Naive thymus-derived CD4-positive, alpha-beta T cell (primary cell): ENCODE measurements at regions of chr1 and their contacts with region 1.

Region 1: GRCh38 chr1:179081687-179082332 is at the start of gene TOR3A:
- DNase-seq: peak; percentile 51 to 82 (median 58)
- ATAC-seq: peak; percentile 80
- H3K4me3 ChIP-seq: peak within 1 kb of the TSS; percentile 93
- H3K4me3 Mint-ChIP-seq: peak within 1 kb of the TSS; percentile 91 to 100 (median 95)
- H3K27ac ChIP-seq: peak within 1 kb of the TSS; percentile 76
- H3K27ac Mint-ChIP-seq: peak within 1 kb of the TSS; percentile 84 to 99 (median 95)
- H3K4me1 ChIP-seq: peaks cover 4 to 11% of the 10 kb centered on the region in 2 donors
- H3K4me1 Mint-ChIP-seq: peaks cover 14 to 38% (median 25%) of the 10 kb centered on the region in 7 donors
- H3K27me3 ChIP-seq: no peaks in the 10 kb centered on the region
- H3K27me3 Mint-ChIP-seq: no peaks in the 10 kb centered on the region
- total RNA-seq, gene TOR3A: 18.8 to 43.8 (median 21.7) TPM

Region 2: GRCh38 chr1:178532392-178532791 is 549.4 kb before region 1 on chr1:
- CTCF ChIA-PET with region 1: no interaction called
- POLR2A ChIA-PET with region 1: no interaction called
- intact Hi-C with region 1: loop called in 1 of 2 experiments (anchors 5 kb)
- DNase-seq: peak; percentile 42 to 74 (median 63)
- ATAC-seq: peak; percentile 92
- H3K4me3 ChIP-seq: no peak overlapping the region
- H3K4me3 Mint-ChIP-seq: peak overlapping the region in 1 of 10 donors; percentile 27
- H3K27ac ChIP-seq: no peak overlapping the region
- H3K27ac Mint-ChIP-seq: no peak overlapping the region
- H3K4me1 ChIP-seq: peaks cover 0 to 6% of the 10 kb centered on the region in 2 donors
- H3K4me1 Mint-ChIP-seq: peaks cover 0 to 4% (median 4%) of the 10 kb centered on the region in 7 donors
- H3K27me3 ChIP-seq: no peaks in the 10 kb centered on the region
- H3K27me3 Mint-ChIP-seq: peaks cover 0 to 2% (median 0%) of the 10 kb centered on the region in 5 donors

Region 3: GRCh38 chr1:179025125-179025974 is 56.5 kb before region 1 on chr1 and contains the start of gene FAM20B:
- CTCF ChIA-PET with region 1: no interaction called
- POLR2A ChIA-PET with region 1: interaction called, 4 read pairs
- intact Hi-C with region 1: loop called (anchors 1 kb)
- DNase-seq: peak; percentile 80 to 89 (median 86)
- ATAC-seq: peak; percentile 95
- H3K4me3 ChIP-seq: peak within 1 kb of the TSS; percentile 71
- H3K4me3 Mint-ChIP-seq: peak within 1 kb of the TSS; percentile 87 to 98 (median 91)
- H3K27ac ChIP-seq: peak within 1 kb of the TSS; percentile 84
- H3K27ac Mint-ChIP-seq: peak within 1 kb of the TSS; percentile 86 to 92 (median 89)
- H3K4me1 ChIP-seq: peaks cover 10 to 17% of the 10 kb centered on the region in 2 donors
- H3K4me1 Mint-ChIP-seq: peaks cover 35 to 60% (median 50%) of the 10 kb centered on the region in 7 donors
- H3K27me3 ChIP-seq: no peaks in the 10 kb centered on the region
- H3K27me3 Mint-ChIP-seq: peaks cover 0 to 31% (median 0%) of the 10 kb centered on the region in 5 donors
- total RNA-seq, gene FAM20B: 14.3 to 27.9 (median 25.2) TPM

Region 4: GRCh38 chr1:179129702-179130473 is 48.1 kb after region 1 on chr1:
- CTCF ChIA-PET with region 1: no interaction called
- POLR2A ChIA-PET with region 1: interaction called, 4 read pairs
- intact Hi-C with region 1: loop called (anchors 1 to 2 kb)
- DNase-seq: peak in 8 of 9 donors; percentile 28 to 83 (median 72)
- ATAC-seq: peak; percentile 95
- H3K4me3 ChIP-seq: peak overlapping the region; percentile 38
- H3K4me3 Mint-ChIP-seq: peak overlapping the region; percentile 63 to 93 (median 80)
- H3K27ac ChIP-seq: peak overlapping the region; percentile 79
- H3K27ac Mint-ChIP-seq: peak overlapping the region; percentile 87 to 96 (median 94)
- H3K4me1 ChIP-seq: peaks cover 4 to 17% of the 10 kb centered on the region in 2 donors
- H3K4me1 Mint-ChIP-seq: peaks cover 3 to 33% (median 22%) of the 10 kb centered on the region in 7 donors
- H3K27me3 ChIP-seq: no peaks in the 10 kb centered on the region
- H3K27me3 Mint-ChIP-seq: no peaks in the 10 kb centered on the region

Region 5: DNA sequence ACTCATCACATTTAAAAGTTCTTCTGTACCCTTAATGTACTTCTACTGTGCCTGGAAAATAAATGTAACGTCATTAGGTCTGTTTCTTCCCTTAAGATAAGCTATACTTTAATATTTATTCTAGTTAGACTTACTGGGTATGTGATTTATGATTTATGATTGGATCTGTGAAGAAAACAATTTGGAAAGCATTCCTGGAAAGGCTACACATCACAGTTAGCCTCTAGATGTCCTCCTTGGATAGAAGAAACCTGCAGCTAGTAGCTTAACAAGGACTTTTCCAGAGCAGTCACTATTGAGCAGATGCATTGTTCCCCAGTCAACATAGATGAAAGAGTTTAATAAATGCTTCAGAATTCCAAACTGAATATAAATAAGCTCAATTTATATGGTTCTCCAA is 169.9 kb after region 1 on chr1:
- CTCF ChIA-PET with region 1: no interaction called
- POLR2A ChIA-PET with region 1: no interaction called
- intact Hi-C with region 1: loop called in 1 of 2 experiments (anchors 1 kb)
- DNase-seq: peak in 3 of 9 donors; percentile 9 to 22 (median 12)
- ATAC-seq: no peak
- H3K4me3 ChIP-seq: no peak overlapping the region
- H3K4me3 Mint-ChIP-seq: no peak overlapping the region
- H3K27ac ChIP-seq: no peak overlapping the region
- H3K27ac Mint-ChIP-seq: peak overlapping the region in 1 of 9 donors; percentile 26
- H3K4me1 ChIP-seq: no peaks in the 10 kb centered on the region
- H3K4me1 Mint-ChIP-seq: no peaks in the 10 kb centered on the region
- H3K27me3 ChIP-seq: no peaks in the 10 kb centered on the region
- H3K27me3 Mint-ChIP-seq: no peaks in the 10 kb centered on the region

Region 6: GRCh38 chr1:179599623-179600249 is 517.9 kb after region 1 on chr1:
- CTCF ChIA-PET with region 1: no interaction called
- POLR2A ChIA-PET with region 1: no interaction called
- intact Hi-C with region 1: loop called in 1 of 2 experiments (anchors 2 kb)
- DNase-seq: peak in 1 of 9 donors; percentile 3
- ATAC-seq: peak; percentile 29
- H3K4me3 ChIP-seq: no peak overlapping the region
- H3K4me3 Mint-ChIP-seq: no peak overlapping the region
- H3K27ac ChIP-seq: no peak overlapping the region
- H3K27ac Mint-ChIP-seq: no peak overlapping the region
- H3K4me1 ChIP-seq: no peaks in the 10 kb centered on the region
- H3K4me1 Mint-ChIP-seq: no peaks in the 10 kb centered on the region
- H3K27me3 ChIP-seq: no peaks in the 10 kb centered on the region
- H3K27me3 Mint-ChIP-seq: peaks cover 12 to 47% (median 26%) of the 10 kb centered on the region in 5 donors